Activated naive CD4-positive, alpha-beta T cell treated with anti-CD3 and anti-CD28 coated beads for 36 hours (primary cell): ENCODE measurements at regions of chr4 and their contacts with region 1.

Region 1: DNA sequence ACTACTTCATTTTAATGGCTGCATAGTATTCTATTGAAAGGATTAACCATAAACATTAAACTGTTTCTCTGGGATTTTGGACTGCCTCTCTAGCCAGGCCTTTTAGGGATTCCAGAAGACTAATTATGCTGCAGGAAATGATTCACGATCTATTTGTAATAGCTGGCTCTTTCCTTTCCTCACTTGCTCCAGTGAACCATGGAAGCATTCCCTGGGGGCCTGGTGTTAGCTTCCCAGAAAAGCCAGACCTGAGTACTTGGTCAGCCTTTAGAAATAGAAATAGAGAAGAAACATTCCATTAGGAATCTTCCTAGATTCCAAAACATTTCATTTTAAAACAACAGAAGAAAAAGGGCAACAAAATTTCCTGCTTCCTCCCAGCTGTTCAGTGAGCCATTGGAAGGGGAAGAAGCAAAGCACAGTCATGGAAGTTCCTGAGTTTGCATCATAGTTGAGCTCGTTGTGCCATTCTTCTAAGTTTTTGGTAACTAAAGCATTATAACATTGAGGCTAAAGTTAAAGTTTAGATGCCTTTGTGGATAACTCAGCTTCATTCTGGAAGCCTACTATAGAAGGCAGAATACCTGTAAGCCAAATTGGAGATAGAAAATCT is 83.5 kb downstream of the NPNT start:
- DNase-seq: no peak
- H3K4me3 Mint-ChIP-seq: no peak overlapping the region
- H3K27ac Mint-ChIP-seq: no peak overlapping the region
- H3K4me1 Mint-ChIP-seq: no peaks in the 10 kb centered on the region
- H3K27me3 Mint-ChIP-seq: no peaks in the 10 kb centered on the region

Region 2: GRCh38 chr4:104772849-104773248 is 1205.9 kb before region 1 on chr4:
- CTCF ChIA-PET with region 1: interaction called, 10 read pairs
- intact Hi-C with region 1: no loop called
- DNase-seq: no peak
- H3K4me3 Mint-ChIP-seq: no peak overlapping the region
- H3K27ac Mint-ChIP-seq: no peak overlapping the region
- H3K4me1 Mint-ChIP-seq: no peaks in the 10 kb centered on the region
- H3K27me3 Mint-ChIP-seq: no peaks in the 10 kb centered on the region